HCT116 (cell line): ENCODE measurements at regions of chr18 and their contacts with region 1.

Region 1: DNA sequence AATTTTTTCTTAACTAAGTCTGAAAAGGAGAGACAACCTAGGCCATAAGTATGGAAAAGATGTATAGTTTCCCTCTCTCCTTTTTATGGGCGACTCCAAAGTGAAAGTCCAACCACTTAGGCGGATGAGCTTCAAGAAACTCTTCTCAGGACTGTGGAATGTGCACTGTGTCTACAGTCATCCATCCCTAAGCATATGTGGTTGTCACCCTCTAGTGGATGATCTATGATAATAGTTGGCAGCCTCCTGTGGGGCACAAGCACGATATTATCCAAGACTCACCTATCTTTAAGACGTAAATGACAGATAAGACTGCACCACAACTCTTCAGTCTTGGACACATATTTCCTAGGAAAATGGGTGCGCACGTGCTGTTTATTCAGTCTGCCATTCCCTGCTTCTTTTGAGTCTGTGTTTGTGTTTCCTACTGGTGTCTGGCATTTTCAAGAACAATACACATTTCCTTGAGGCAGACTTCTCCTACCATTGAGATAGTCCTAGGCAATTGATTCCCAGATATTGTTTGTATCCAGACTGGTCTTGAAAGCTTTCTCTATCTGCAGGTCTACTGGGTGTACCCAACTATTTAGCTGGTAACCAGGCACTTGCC is 145.5 kb upstream of the CTAGE1 start:
- DNase-seq: peak; percentile 74
- ATAC-seq: peak; percentile 81
- H3K4me3 ChIP-seq: peak overlapping the region; percentile 1 to 4; a peak in 3 of 4 replicates
- H3K27ac ChIP-seq: no peak overlapping the region
- H3K4me1 ChIP-seq: peaks cover 4 to 22% of the 10 kb centered on the region in 2 experiments; a peak in 3 of 4 replicates
- H3K27me3 ChIP-seq: no peaks in the 10 kb centered on the region
- CTCF ChIP-seq: peak; percentile 76 to 82 (median 81)
- POLR2A ChIP-seq: no peak
- RAD21 ChIP-seq: peak; percentile 97

Region 2: DNA sequence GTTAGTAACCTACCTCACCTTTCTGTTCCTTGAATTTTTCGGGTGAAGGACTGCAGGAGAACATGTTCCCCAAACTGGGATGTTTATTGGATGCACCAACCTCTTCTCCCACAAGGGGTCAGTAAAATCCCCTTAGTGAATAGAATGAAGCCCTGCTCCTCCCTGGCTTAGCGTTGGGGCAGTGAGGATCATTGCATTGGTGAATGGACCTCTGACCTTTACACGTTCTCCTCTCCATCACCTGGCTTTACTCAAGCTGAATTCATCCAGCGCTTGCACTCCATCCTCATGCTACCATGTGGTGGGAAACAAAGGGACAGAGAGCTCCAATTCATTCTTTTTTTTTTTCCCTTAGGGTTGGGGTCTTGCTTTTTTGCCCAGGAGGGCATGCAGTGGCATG is 665.4 kb before region 1 on chr18:
- CTCF ChIA-PET with region 1: no interaction called
- POLR2A ChIA-PET with region 1: no interaction called
- RAD21 ChIA-PET with region 1: no interaction called
- intact Hi-C with region 1: loop called (anchors 5 kb)
- DNase-seq: peak; percentile 41
- ATAC-seq: peak; percentile 95
- H3K4me3 ChIP-seq: no peak overlapping the region
- H3K27ac ChIP-seq: no peak overlapping the region
- H3K4me1 ChIP-seq: peaks cover 0 to 4% of the 10 kb centered on the region in 2 experiments; a peak in 1 of 4 replicates
- H3K27me3 ChIP-seq: no peaks in the 10 kb centered on the region
- CTCF ChIP-seq: peak; percentile 45 to 78 (median 75); a peak in 5 of 6 replicates
- POLR2A ChIP-seq: no peak
- RAD21 ChIP-seq: peak; percentile 72

Region 3: GRCh38 chr18:21997207-21998143 is 565.7 kb before region 1 on chr18:
- CTCF ChIA-PET with region 1: interaction called, 6 read pairs
- POLR2A ChIA-PET with region 1: no interaction called
- RAD21 ChIA-PET with region 1: no interaction called
- intact Hi-C with region 1: loop called (anchors 2 kb)
- DNase-seq: peak; percentile 48
- ATAC-seq: peak; percentile 92
- H3K4me3 ChIP-seq: no peak overlapping the region
- H3K27ac ChIP-seq: no peak overlapping the region
- H3K4me1 ChIP-seq: no peaks in the 10 kb centered on the region
- H3K27me3 ChIP-seq: no peaks in the 10 kb centered on the region
- CTCF ChIP-seq: peak; percentile 36 to 93 (median 82); a peak in 5 of 6 replicates
- POLR2A ChIP-seq: no peak
- RAD21 ChIP-seq: peak; percentile 63

Region 4: DNA sequence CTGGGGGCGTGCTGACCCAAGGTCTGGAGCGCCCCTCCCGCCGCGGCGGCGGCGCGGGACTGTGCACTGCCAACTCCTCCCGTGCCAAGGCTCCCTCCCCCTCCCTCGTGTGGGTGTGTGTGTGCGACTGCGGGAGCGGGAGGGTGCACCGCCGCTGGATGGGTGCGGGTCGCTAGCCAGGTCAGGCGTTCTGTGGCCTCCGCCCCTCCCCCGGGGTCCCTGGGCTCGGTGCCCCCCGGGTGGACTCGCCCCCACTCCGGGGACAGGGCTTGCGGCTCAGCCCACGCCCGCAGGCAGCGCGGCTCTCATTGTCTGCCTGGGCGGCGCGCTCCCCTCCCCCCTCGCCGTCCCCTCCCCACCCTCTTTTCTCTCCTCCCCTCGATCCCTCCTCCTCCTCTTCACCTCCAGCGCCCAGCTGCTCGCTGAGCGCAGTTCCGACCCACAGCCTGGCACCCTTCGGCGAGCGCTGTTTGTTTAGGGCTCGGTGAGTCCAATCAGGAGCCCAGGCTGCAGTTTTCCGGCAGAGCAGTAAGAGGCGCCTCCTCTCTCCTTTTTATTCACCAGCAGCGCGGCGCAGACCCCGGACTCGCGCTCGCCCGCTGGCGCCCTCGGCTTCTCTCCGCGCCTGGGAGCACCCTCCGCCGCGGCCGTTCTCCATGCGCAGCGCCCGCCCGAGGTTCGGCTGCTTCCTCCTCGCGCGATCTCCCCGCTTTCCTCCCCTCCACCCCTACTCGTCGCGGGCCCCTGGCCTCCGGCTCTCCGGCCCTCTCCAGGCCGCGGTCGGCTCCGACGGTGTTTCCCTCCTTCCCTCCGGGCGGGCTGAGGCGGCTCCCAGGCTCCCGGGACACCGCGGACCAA is 394.0 kb before region 1 on chr18 and contains the start of gene GATA6:
- CTCF ChIA-PET with region 1: interaction called, 3 read pairs
- POLR2A ChIA-PET with region 1: no interaction called
- RAD21 ChIA-PET with region 1: no interaction called
- intact Hi-C with region 1: loop called (anchors 2 kb)
- DNase-seq: peak; percentile 85
- ATAC-seq: peak; percentile 84
- H3K4me3 ChIP-seq: peak within 1 kb of the TSS; percentile 72 to 84
- H3K27ac ChIP-seq: peak within 1 kb of the TSS; percentile 75
- H3K4me1 ChIP-seq: peaks cover 5 to 19% of the 10 kb centered on the region in 2 experiments; a peak in 2 of 4 replicates
- H3K27me3 ChIP-seq: peaks cover 8% of the 10 kb centered on the region; the same call in 1 of the 2 replicates
- CTCF ChIP-seq: peak; percentile 24 to 38 (median 36); a peak in 4 of 6 replicates
- POLR2A ChIP-seq: peak; percentile 38
- RAD21 ChIP-seq: peak; percentile 64
- total RNA-seq, gene GATA6: 3.3 TPM

Region 5: DNA sequence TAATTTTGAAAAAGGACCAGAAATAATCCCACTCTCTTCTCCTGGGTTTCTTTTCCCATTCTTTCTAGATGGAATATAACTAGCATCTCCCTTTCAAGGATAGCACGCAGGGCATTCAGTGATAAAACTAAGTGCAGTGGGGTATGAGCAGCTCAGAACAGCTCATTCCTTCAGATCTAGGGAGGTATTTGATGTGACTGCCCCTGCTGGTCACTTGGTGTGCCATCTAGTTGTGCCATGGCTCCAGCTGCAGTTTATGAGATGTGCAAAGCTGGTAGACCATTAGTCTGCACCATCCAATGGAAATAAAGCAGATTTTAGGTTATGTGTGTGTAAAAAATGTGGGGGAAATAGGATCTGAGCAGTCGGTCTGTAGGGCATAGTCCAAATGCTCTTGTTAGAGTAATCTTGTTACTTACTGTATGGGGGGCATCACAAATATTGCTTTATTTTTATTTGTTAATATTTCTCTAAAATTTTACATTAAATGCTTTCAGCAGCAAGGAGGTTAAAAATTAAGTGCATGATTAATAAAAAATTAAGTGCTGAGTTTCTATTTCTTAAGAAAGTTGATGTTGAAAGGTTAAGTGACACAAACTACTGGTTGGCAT is 184.4 kb before region 1 on chr18:
- CTCF ChIA-PET with region 1: interaction called, 8 read pairs
- POLR2A ChIA-PET with region 1: no interaction called
- RAD21 ChIA-PET with region 1: no interaction called
- intact Hi-C with region 1: loop called (anchors 10 kb)
- DNase-seq: peak; percentile 39
- ATAC-seq: peak; percentile 100
- H3K4me3 ChIP-seq: no peak overlapping the region
- H3K27ac ChIP-seq: no peak overlapping the region
- H3K4me1 ChIP-seq: no peaks in the 10 kb centered on the region
- H3K27me3 ChIP-seq: no peaks in the 10 kb centered on the region
- CTCF ChIP-seq: peak; percentile 12 to 83 (median 77); a peak in 5 of 6 replicates
- POLR2A ChIP-seq: no peak
- RAD21 ChIP-seq: peak; percentile 46; the same call in 1 of the 2 replicates

Region 6: DNA sequence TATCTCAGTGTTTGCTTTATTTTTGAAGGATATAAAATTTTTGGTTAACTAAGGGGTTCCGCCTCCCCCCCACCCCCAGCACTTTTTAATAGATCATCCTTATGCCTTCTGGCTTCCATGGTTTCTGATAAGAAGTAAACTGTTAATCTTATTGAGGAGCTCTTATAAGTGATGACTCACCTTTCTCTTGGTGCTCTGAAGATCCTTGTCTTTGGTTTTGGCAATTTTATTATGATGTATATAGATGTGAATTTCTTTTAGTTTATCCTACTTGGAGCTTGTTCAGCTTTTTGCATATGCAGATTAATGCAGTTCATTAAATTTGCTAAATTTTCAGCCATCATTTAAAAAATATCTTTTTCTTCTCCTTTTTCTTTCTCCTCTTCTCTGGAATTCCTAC is 53.8 kb before region 1 on chr18:
- CTCF ChIA-PET with region 1: no interaction called
- POLR2A ChIA-PET with region 1: no interaction called
- RAD21 ChIA-PET with region 1: no interaction called
- intact Hi-C with region 1: no loop called
- DNase-seq: no peak
- ATAC-seq: no peak
- H3K4me3 ChIP-seq: no peak overlapping the region
- H3K27ac ChIP-seq: no peak overlapping the region
- H3K4me1 ChIP-seq: no peaks in the 10 kb centered on the region
- H3K27me3 ChIP-seq: no peaks in the 10 kb centered on the region
- CTCF ChIP-seq: no peak
- POLR2A ChIP-seq: no peak
- RAD21 ChIP-seq: no peak